GM18951 (cell line): ENCODE measurements at regions of chr19 and their contacts with region 1.

Region 1: GRCh38 chr19:21604351-21604926 is 99.0 kb downstream of the ZNF429 start:
- POLR2A ChIP-seq: no peak

Region 2: DNA sequence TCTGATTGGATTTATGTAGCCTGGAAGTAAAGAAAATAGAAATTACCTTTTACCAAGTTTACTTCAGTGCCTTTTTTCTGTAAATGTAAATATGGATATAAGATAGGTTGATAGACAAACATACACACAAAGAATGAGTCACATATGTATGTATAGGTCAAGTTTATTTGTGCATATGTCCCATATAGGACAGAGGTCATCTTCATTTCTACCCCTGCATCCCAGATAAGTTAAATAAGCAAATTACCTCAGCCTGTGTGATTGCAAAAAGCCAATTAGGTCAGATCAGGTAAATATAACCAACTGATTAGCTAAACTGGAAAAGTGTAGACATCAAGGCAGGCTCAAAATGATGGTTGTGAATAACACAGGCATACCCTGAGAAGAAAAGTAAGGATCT is 877.7 kb before region 1 on chr19:
- in situ Hi-C with region 1: loop called (anchors 25 kb)
- POLR2A ChIP-seq: no peak

Region 3: DNA sequence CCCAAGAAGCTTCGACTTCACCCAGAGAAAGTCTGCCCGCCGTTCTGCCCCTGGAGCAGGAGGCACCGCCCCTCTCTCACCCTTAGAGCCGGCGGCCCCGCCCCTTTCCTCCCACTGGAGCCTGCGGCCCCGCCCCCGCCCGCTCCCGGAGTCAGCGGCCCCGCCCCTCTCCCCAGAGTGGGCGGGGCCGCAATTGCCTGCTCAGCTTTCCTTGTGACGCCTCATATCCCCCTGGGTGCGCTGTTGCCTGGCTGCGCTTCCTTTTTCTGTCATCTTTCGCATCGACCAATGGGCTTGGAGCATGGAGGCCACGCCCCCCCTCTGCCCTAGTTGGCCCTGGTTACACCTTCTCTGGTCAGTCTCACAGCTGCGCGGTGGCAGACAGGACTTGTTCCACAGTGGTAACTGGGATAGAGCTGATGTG is 991.5 kb after region 1 on chr19:
- in situ Hi-C with region 1: no loop called
- POLR2A ChIP-seq: no peak